Ovary (tissue), 10 donors: ENCODE measurements at regions of chr9 and their contacts with region 1.

Region 1: DNA sequence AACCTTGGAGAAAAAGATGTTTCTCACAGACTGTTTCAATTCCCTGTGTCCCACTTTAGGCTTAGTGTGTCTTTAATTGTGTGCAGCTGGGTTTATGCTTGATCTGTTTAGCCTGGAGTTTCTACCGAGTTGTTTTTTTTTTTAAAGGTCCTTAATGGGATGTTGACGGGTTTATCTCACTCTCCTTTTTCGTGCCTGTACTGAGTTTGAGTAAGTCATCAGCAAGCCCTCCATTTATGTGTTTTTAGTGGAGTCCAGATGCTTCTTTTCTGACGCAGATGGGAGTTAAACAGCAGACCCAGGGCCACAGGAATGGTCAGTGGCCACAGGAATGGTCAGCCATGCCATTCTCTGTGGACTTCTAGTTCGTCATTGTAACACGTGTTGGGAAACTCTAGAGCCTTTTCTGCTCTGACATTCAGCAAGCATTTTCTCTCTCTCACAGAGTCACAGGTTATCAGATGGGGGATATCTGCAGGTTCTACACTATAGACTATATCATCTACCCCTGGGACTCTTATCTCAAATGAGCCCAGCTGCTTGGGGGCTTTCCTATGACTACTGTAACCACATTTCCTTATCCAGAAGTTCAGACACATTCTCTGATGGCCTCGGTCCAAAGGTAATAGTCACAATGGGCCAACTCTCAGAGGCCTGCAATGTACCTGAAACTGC is 190.5 kb downstream of the TTLL11 start:
- DNase-seq: peak in 1 of 5 donors; percentile 34
- H3K4me3 ChIP-seq: no peak overlapping the region
- H3K27ac ChIP-seq: peak overlapping the region; percentile 27 to 72
- H3K4me1 ChIP-seq: peaks cover 5% of the 10 kb centered on the region
- H3K27me3 ChIP-seq: no peaks in the 10 kb centered on the region
- CTCF ChIP-seq: no peak
- EP300 ChIP-seq: no peak
- POLR2A ChIP-seq: no peak

Region 2: GRCh38 chr9:121744002-121744686 is 158.5 kb before region 1 on chr9:
- intact Hi-C with region 1: loop called in 1 of 4 experiments (anchors 10 kb)
- DNase-seq: peak in 4 of 5 donors; percentile 61 to 68 (median 67)
- H3K4me3 ChIP-seq: peak overlapping the region; percentile 56
- H3K27ac ChIP-seq: peak overlapping the region; percentile 80 to 92
- H3K4me1 ChIP-seq: peaks cover 54% of the 10 kb centered on the region
- H3K27me3 ChIP-seq: no peaks in the 10 kb centered on the region
- CTCF ChIP-seq: peak in 1 of 3 donors; percentile 30
- EP300 ChIP-seq: no peak
- POLR2A ChIP-seq: no peak

Region 3: DNA sequence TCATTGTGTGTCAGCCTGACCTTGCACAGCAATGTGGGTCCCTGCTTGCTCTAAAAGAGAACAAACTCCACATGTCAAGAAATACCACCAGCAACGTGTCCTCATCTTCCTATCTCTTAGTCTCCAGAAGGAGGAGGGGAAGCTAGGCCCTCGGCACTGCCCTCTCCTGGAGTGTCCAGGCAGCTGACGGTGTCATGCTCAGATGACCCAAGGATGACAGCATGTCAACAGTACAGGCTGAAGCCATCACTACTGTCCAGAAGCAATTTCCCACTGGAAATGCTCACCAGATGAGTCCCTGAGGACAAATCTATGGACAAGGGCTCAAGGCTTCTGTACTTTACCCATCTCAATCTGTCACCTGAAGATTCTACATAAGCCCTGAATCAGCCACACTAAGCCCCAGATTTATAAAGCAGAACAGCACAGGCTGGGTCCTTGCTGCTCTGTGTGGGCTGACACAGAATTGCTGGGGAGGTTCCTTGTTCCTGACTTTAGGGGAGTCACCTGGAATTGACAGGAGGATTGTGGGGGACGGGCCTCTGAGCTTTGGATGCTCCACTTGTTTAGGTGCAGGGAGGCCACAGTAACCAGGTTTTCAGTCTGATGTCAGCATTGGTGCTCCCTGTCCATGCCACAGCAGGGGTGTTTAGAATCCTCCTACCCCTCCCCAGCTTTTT is 41.0 kb before region 1 on chr9:
- intact Hi-C with region 1: loop called in 1 of 4 experiments (anchors 5 kb)
- DNase-seq: no peak
- H3K4me3 ChIP-seq: no peak overlapping the region
- H3K27ac ChIP-seq: peak overlapping the region in 1 of 2 donors; percentile 36
- H3K4me1 ChIP-seq: peaks cover 5% of the 10 kb centered on the region
- H3K27me3 ChIP-seq: no peaks in the 10 kb centered on the region
- CTCF ChIP-seq: peak in 2 of 3 donors; percentile 16 to 34
- EP300 ChIP-seq: no peak
- POLR2A ChIP-seq: no peak

Region 4: DNA sequence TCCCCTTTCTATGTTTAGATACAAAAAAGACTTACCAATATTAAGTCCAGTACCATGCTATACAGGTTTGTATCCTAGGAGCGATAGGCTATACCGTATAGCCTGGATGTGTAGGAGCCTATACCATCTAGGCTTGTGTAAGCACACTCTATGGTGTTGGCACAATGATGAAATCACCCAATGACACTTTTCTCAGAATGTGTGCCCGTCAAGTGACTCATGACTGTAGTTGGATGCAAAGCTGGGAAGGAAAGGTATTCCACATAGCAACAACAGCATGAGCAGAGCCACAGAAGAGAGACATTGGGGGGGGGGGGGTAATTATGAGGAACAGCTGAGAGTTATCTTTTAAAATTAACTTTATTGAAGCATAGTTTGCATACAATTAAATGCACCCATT is 127.3 kb after region 1 on chr9:
- intact Hi-C with region 1: no loop called
- DNase-seq: no peak
- H3K4me3 ChIP-seq: no peak overlapping the region
- H3K27ac ChIP-seq: no peak overlapping the region
- H3K4me1 ChIP-seq: peaks cover 2% of the 10 kb centered on the region
- H3K27me3 ChIP-seq: no peaks in the 10 kb centered on the region
- CTCF ChIP-seq: no peak
- EP300 ChIP-seq: no peak
- POLR2A ChIP-seq: no peak